ENCODE measurements at regions of chr2 and their contacts with region 1.

Region 1: GRCh38 chr2:7083577-7084509 is 166.6 kb downstream of the RNF144A start:
- DNase-seq: peak in 1 of 2 experiments; percentile 35
- H3K4me3 ChIP-seq: no peak overlapping the region
- H3K4me3 Mint-ChIP-seq: no peak overlapping the region
- H3K27ac Mint-ChIP-seq: no peak overlapping the region
- H3K4me1 ChIP-seq: no peaks in the 10 kb centered on the region
- H3K4me1 Mint-ChIP-seq: no peaks in the 10 kb centered on the region
- H3K27me3 ChIP-seq: no peaks in the 10 kb centered on the region
- H3K27me3 Mint-ChIP-seq: peaks cover 11% of the 10 kb centered on the region
- CTCF ChIP-seq: peak; percentile 50 to 59

Region 2: DNA sequence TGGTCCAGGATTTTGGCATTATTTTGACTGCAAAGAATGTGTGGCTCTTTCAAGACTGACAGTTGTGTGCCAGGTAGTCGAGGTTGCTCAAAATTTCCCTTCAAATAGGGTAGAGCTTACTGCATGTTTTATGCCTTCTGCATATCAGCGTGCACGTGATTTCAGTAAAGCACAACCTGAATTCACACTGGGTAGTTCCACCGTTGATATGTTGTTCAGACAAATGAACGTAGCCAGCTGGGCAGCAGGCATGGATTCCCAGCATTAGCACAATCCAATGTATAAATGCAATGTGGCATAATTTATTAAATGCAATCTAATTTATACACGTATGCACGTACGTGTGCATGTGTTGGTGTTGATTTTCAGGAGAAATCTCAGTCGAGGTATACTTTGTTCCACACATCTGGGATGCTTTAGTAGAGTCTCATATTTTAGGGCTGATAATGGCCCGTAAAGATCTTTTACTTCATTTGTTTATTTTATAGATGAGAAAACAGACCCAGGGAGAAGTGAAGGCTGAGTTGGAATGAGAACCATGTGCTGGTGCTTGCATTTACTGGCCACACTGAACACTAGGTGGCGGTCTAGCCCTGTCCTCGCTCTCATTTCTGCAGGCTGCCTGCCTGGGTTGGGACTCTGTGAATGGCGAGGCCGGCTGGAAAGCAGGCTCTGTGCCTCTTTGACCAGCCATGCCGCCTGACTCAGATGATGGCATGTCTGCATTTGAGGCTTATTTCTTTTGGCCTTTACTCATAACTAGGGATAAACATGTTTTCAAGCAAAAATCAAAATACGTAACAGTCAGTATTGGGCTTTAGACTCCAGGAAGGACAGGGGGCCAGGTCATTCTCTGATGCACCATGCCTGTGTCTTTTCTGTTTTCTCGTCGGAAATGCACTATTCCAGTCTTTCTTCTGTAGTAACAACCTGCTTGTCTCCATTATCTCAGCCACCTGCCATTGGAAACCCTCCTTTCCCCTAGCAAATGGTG is 46.2 kb before region 1 on chr2:
- CTCF ChIA-PET with region 1: no interaction called
- POLR2A ChIA-PET with region 1: no interaction called
- intact Hi-C with region 1: loop called (anchors 1 kb)
- DNase-seq: peak; percentile 57 to 62
- H3K4me3 ChIP-seq: no peak overlapping the region
- H3K4me3 Mint-ChIP-seq: no peak overlapping the region
- H3K27ac Mint-ChIP-seq: no peak overlapping the region
- H3K4me1 ChIP-seq: no peaks in the 10 kb centered on the region
- H3K4me1 Mint-ChIP-seq: no peaks in the 10 kb centered on the region
- H3K27me3 ChIP-seq: no peaks in the 10 kb centered on the region
- H3K27me3 Mint-ChIP-seq: no peaks in the 10 kb centered on the region
- CTCF ChIP-seq: peak; percentile 59 to 61